Activated CD4-positive, alpha-beta T cell treated with anti-CD3 and anti-CD28 coated beads, Interleukin-2, amount 10 ng/mL, durations not matched to agents 24 days and 14 days (primary cell): ENCODE measurements at regions of chr12 and their contacts with region 1.

Region 1: GRCh38 chr12:93167841-93168492 is 209.8 kb upstream of the NUDT4 start:
- DNase-seq: peak; percentile 62
- H3K4me3 Mint-ChIP-seq: peak overlapping the region; percentile 17
- H3K27ac Mint-ChIP-seq: peak overlapping the region; percentile 68
- H3K4me1 Mint-ChIP-seq: peaks cover 13% of the 10 kb centered on the region
- H3K27me3 Mint-ChIP-seq: no peaks in the 10 kb centered on the region

Region 2: DNA sequence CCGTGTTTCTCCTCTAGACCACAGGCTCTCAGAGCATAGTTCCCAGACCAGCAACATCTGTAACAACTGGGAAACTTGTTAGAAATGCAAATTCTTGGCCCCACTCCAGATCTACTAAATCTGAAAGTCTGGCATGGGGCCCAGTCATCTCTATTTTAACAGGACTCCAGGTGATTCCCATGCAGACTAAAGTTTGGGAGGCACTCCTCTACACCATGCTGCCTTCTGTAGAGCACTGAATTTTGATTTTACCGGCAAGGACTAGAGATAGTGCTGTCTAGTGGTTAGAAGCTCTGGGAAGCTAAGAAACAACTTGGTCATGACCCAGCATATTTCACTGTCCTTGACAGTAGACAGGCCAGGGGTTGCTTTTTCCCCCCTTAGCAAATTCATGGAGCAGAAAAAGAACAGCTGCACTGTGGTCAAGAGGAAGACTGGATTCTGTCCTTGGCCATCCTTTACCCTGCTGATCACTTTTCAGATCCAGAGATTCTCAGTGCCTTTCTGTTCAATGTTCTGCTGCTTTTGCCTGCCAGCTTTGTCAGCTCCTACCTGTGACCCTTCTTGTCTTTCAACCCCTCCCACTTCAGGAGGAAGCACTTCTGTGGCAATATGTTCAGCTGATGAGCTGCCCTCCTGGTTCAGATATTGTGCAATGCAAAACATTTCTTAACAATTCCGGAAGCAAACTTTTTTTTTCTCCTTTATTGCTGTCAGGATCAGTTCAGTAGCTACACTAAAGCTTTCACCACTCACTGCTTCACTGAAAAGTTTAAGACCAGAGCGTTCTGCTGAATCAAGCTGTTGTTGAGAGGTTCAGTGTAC is 75.9 kb after region 1 on chr12:
- intact Hi-C with region 1: loop called (anchors 2 kb)
- DNase-seq: peak; percentile 74
- H3K4me3 Mint-ChIP-seq: peak overlapping the region; percentile 78
- H3K27ac Mint-ChIP-seq: peak overlapping the region; percentile 77
- H3K4me1 Mint-ChIP-seq: peaks cover 34% of the 10 kb centered on the region
- H3K27me3 Mint-ChIP-seq: no peaks in the 10 kb centered on the region